Activated CD4-positive, alpha-beta T cell treated with anti-CD3 and anti-CD28 coated beads for 36 hours (primary cell): ENCODE measurements at regions of chr19 and their contacts with region 1.

Region 1: DNA sequence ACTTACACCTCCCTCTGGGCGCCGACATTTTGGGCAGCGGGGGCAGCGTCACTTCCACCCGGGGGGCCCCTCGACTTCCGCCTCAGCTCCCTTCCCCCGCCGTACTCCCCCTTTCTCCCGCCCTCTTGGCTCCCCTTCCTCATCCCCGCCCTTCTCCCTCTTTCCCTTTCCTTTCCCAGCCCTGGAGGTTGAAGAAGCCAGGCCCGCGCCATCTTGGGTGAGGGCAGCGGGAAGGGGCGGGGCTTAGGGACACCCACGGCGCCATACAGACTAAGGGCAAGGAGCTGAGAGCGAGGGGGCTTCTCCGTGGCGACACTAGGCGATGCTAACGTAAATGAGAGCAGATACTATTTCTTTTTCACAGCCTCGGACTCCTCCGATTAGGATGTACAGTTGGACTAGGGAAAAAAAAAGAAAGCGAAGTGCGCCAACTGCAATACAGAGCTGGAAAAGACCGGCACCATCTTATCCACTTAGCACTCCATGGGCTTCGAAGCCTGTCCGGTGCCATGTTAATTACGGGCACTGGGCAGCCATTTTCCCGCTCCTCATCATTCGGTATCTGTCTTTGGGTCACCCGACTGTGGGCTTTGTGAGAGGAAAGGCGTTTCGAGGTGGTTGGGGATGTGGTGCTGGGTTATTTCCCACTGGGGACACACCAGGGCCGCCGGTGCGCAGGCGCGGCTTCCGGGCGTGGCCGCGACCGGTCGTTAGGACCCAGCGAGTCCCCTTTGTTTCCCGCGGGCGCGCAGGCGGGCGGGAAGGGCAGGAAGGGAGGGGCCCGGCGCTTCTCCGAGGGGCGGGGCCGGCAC is at the start of gene FIZ1:
- DNase-seq: peak; percentile 98
- ATAC-seq: peak; percentile 79
- H3K4me3 Mint-ChIP-seq: peak within 1 kb of the TSS; percentile 89
- H3K27ac Mint-ChIP-seq: peak within 1 kb of the TSS; percentile 99
- H3K4me1 Mint-ChIP-seq: peaks cover 31% of the 10 kb centered on the region
- H3K27me3 Mint-ChIP-seq: no peaks in the 10 kb centered on the region
- total RNA-seq, gene FIZ1: 13.6 to 14.7 TPM

Region 2: DNA sequence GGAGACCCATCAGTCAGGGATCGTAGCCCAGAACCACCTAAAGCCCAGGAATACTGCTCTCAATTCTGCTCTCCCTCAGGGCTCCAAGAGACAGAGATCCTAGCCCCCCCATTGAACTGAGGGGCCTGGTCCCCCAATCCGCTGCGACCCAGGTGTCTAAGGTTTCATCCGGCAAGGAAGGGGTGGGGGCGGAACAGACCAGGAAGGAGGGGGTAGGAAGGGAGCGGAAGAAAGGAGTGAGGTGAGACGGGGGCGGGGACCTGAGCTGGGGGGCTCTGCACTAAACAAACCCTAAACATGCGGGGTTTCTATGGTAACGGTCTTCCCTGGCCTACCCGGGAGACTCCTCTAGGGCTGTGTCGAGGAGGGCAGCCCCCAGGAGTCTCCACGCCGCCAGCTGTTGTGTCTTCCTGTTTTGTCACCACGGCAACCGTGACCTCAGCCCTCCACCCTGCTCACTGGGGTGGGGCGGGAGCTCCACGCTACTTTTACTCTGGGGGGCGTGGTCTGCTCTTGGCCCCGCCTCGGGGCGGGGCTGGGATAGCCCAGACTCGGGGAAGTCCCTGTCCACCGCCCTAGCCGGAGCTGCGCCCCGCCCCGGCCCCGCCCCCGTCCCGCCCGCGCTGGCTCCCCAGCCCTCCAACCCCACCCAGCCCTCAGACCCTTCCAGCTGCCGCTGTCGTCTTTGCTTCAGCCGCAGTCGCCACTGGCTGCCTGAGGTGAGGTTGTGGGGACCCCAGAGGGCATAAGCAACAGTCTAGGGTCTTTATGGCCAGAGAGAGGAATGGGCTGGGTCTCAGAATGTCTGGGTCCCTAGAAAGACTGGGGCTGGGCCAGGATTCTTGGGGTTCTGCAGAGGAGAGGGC is 1732.2 kb before region 1 on chr19 and contains the start of gene MYADM:
- CTCF ChIA-PET with region 1: no interaction called
- POLR2A ChIA-PET with region 1: no interaction called
- intact Hi-C with region 1: loop called in 1 of 2 experiments (anchors 2 kb)
- DNase-seq: peak; percentile 99
- ATAC-seq: peak; percentile 71
- H3K4me3 Mint-ChIP-seq: peak within 1 kb of the TSS; percentile 91
- H3K27ac Mint-ChIP-seq: peak within 1 kb of the TSS; percentile 88
- H3K4me1 Mint-ChIP-seq: peaks cover 32% of the 10 kb centered on the region
- H3K27me3 Mint-ChIP-seq: no peaks in the 10 kb centered on the region
- total RNA-seq, gene MYADM: 46.4 to 54.6 TPM

Region 3: DNA sequence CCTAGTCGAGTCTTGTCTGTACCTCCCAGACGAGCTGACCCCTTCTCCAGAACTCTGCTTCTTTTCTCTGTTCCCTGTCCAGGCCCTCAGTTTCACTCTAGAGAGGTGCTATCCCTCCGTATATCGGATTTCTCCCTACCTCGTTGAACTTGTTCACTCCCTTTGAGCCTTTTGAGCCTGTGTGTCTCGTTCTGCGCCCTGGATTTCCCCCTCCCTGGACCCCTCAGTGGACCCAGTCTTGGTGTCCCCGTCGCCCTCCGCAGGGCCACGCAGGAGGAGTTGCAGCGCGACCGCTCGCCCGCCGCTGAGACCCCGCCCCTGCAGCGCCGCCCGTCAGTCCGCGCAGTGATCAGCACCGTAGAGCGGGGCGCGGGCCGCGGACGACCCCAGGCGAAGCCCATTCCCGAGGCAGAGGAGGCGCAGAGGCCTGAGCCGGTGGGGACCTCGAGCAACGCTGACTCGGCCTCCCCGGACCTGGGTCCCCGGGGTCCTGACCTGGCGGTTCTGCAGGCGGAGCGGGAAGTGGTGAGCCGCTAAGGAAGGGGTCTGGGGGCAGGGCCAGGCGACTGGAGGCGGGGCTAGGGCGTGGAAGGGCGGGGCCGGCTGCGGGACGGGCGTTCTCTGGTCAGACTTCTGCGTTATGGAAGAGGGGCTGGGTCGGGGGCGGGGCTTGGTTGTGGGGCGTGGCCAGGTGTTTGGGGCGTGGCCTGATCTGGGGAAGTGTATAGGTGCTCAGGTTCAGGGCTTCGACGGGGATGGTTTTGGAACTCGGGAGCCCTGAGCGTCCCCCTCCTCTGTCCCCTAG is 518.5 kb before region 1 on chr19:
- CTCF ChIA-PET with region 1: no interaction called
- POLR2A ChIA-PET with region 1: no interaction called
- intact Hi-C with region 1: loop called in 1 of 2 experiments (anchors 2 kb)
- DNase-seq: peak; percentile 95
- ATAC-seq: peak; percentile 71
- H3K4me3 Mint-ChIP-seq: peak overlapping the region; percentile 69
- H3K27ac Mint-ChIP-seq: peak overlapping the region; percentile 31
- H3K4me1 Mint-ChIP-seq: peaks cover 22% of the 10 kb centered on the region
- H3K27me3 Mint-ChIP-seq: peaks cover 56% of the 10 kb centered on the region

Region 4: GRCh38 chr19:55339048-55339888 is 260.4 kb before region 1 on chr19 and contains the start of gene KMT5C:
- CTCF ChIA-PET with region 1: no interaction called
- POLR2A ChIA-PET with region 1: no interaction called
- intact Hi-C with region 1: loop called in 1 of 2 experiments (anchors 1 kb)
- DNase-seq: peak; percentile 100
- ATAC-seq: peak; percentile 86
- H3K4me3 Mint-ChIP-seq: peak within 1 kb of the TSS; percentile 86
- H3K27ac Mint-ChIP-seq: peak within 1 kb of the TSS; percentile 97
- H3K4me1 Mint-ChIP-seq: peaks cover 18% of the 10 kb centered on the region
- H3K27me3 Mint-ChIP-seq: peaks cover 2% of the 10 kb centered on the region
- total RNA-seq, gene KMT5C: 27.5 to 32.3 TPM

Region 5: GRCh38 chr19:55516878-55517620 is 82.6 kb before region 1 on chr19:
- CTCF ChIA-PET with region 1: no interaction called
- POLR2A ChIA-PET with region 1: no interaction called
- intact Hi-C with region 1: loop called in 1 of 2 experiments (anchors 1 kb)
- DNase-seq: peak; percentile 96
- ATAC-seq: peak; percentile 100
- H3K4me3 Mint-ChIP-seq: peak overlapping the region; percentile 54
- H3K27ac Mint-ChIP-seq: peak overlapping the region; percentile 9
- H3K4me1 Mint-ChIP-seq: peaks cover 3% of the 10 kb centered on the region
- H3K27me3 Mint-ChIP-seq: no peaks in the 10 kb centered on the region

Region 6: GRCh38 chr19:55643348-55644176 is 43.9 kb after region 1 on chr19 and contains the start of gene ZNF581:
- CTCF ChIA-PET with region 1: interaction called, 4 read pairs
- POLR2A ChIA-PET with region 1: interaction called, 4 read pairs
- intact Hi-C with region 1: loop called in 1 of 2 experiments (anchors 1 kb)
- DNase-seq: peak; percentile 91
- ATAC-seq: peak; percentile 55
- H3K4me3 Mint-ChIP-seq: peak within 1 kb of the TSS; percentile 93
- H3K27ac Mint-ChIP-seq: peak within 1 kb of the TSS; percentile 99
- H3K4me1 Mint-ChIP-seq: peaks cover 44% of the 10 kb centered on the region
- H3K27me3 Mint-ChIP-seq: no peaks in the 10 kb centered on the region
- total RNA-seq, gene ZNF581: 18.9 to 26.9 TPM